GM12878 (cell line): ENCODE measurements at regions of chr9 and their contacts with region 1.

Region 1: GRCh38 chr9:121322037-121322775 is 47.8 kb downstream of the STOM start:
- DNase-seq: no peak
- ATAC-seq: no peak
- H3K4me3 ChIP-seq: no peak overlapping the region
- H3K27ac ChIP-seq: no peak overlapping the region; the same call in 1 of the 2 replicates
- H3K4me1 ChIP-seq: peaks cover 9% of the 10 kb centered on the region
- H3K27me3 ChIP-seq: no peaks in the 10 kb centered on the region
- CTCF ChIP-seq: no peak
- EP300 ChIP-seq: no peak
- POLR2A ChIP-seq: no peak
- RAD21 ChIP-seq: no peak

Region 2: GRCh38 chr9:121261107-121261460 is 61.1 kb before region 1 on chr9:
- CTCF ChIA-PET with region 1: no interaction called
- POLR2A ChIA-PET with region 1: no interaction called
- RAD21 ChIA-PET with region 1: no interaction called
- SMC1A ChIA-PET with region 1: no interaction called
- in situ Hi-C with region 1: no loop called
- intact Hi-C with region 1: no loop called
- DNase-seq: no peak
- ATAC-seq: no peak
- H3K4me3 ChIP-seq: no peak overlapping the region
- H3K27ac ChIP-seq: no peak overlapping the region
- H3K4me1 ChIP-seq: no peaks in the 10 kb centered on the region
- H3K27me3 ChIP-seq: no peaks in the 10 kb centered on the region
- CTCF ChIP-seq: no peak
- EP300 ChIP-seq: no peak
- POLR2A ChIP-seq: no peak
- RAD21 ChIP-seq: no peak

Region 3: DNA sequence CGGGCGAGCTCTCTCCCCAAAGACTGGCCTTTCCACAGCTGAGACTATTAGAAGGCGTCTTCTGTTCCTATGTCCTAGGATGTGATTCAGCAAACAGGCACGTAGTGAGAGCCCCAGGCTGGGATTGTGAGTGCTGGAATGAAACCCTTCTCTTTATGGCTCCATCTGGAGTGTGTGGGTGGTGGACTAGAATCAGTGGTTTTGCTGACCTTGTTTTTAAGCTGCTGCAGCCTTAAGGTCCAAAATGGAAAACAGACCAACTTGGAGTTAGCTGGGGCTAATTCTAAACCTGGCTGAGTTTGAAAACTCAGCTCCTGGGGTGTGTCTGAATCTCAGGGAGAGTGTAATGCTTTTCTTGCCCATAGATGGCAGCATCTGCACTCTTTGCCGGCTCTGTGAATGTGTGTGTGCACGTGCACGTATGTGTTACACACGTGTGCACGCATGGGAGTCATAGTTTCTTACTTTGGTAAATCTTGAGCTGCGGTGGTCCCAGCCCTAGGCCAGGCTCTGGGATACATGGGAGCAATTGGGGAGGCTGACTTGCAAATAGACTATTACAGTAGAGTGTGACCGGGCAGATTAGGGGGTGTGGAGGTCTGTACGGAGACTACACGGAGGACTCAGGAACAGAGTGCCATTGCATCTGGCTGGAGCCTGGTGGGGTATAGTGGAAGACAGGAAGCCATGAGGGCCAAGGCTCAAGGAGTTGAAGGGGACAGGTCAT is 43.5 kb before region 1 on chr9:
- CTCF ChIA-PET with region 1: interaction called, 16 read pairs
- POLR2A ChIA-PET with region 1: no interaction called
- RAD21 ChIA-PET with region 1: interaction called, 5 read pairs
- SMC1A ChIA-PET with region 1: no interaction called
- in situ Hi-C with region 1: no loop called
- intact Hi-C with region 1: no loop called
- DNase-seq: peak; percentile 11
- ATAC-seq: peak; percentile 95
- H3K4me3 ChIP-seq: no peak overlapping the region
- H3K27ac ChIP-seq: no peak overlapping the region
- H3K4me1 ChIP-seq: peaks cover 5% of the 10 kb centered on the region; the same call in 1 of the 2 replicates
- H3K27me3 ChIP-seq: no peaks in the 10 kb centered on the region
- CTCF ChIP-seq: peak; percentile 60 to 79 (median 62)
- EP300 ChIP-seq: no peak
- POLR2A ChIP-seq: no peak
- RAD21 ChIP-seq: peak; percentile 48

Region 4: GRCh38 chr9:121350993-121351561 is 28.9 kb after region 1 on chr9:
- CTCF ChIA-PET with region 1: interaction called, 20 read pairs
- POLR2A ChIA-PET with region 1: no interaction called
- RAD21 ChIA-PET with region 1: interaction called, 4 read pairs
- SMC1A ChIA-PET with region 1: interaction called, 5 read pairs
- in situ Hi-C with region 1: no loop called
- intact Hi-C with region 1: no loop called
- DNase-seq: no peak
- ATAC-seq: no peak
- H3K4me3 ChIP-seq: no peak overlapping the region
- H3K27ac ChIP-seq: no peak overlapping the region
- H3K4me1 ChIP-seq: peaks cover 15% of the 10 kb centered on the region
- H3K27me3 ChIP-seq: no peaks in the 10 kb centered on the region
- CTCF ChIP-seq: no peak
- EP300 ChIP-seq: no peak
- POLR2A ChIP-seq: no peak
- RAD21 ChIP-seq: no peak

Region 5: DNA sequence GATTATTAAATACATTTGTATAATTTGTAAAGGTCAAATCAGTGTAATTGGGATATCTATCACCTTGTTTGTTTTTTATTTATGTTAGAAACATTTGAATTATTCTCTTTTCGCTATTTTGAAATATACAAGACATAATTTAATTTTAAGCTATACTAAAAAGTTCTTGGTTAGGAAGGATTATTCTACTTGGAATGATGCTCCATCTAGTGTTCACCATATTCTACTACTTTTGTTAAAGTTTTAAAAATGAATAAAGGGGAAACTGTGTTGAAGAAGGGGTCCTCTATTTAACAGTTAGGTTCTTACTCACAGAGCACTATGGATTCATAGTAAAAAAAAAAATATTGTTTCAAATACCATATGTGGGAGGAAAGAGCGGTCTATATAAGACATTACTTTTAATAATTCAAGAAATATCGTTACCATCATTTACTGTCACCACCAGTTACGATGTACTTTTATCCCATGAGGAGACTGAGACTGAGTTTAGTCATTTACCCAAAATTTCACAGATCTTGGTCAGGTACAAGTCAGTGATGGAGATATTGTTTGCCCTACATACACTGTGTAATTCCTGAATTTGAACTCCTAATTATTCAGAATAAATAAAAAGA is 54.1 kb after region 1 on chr9:
- CTCF ChIA-PET with region 1: interaction called, 173 read pairs
- POLR2A ChIA-PET with region 1: no interaction called
- RAD21 ChIA-PET with region 1: interaction called, 37 read pairs
- SMC1A ChIA-PET with region 1: interaction called, 83 read pairs
- in situ Hi-C with region 1: no loop called
- intact Hi-C with region 1: loop called (anchors 1 kb)
- DNase-seq: no peak
- ATAC-seq: no peak
- H3K4me3 ChIP-seq: no peak overlapping the region
- H3K27ac ChIP-seq: no peak overlapping the region
- H3K4me1 ChIP-seq: no peaks in the 10 kb centered on the region
- H3K27me3 ChIP-seq: no peaks in the 10 kb centered on the region; a peak in 1 of 4 replicates
- CTCF ChIP-seq: peak in 1 of 3 experiments; percentile 9; a peak in 2 of 6 replicates
- EP300 ChIP-seq: no peak
- POLR2A ChIP-seq: no peak
- RAD21 ChIP-seq: peak; percentile 37; the same call in 1 of the 2 replicates

Region 6: DNA sequence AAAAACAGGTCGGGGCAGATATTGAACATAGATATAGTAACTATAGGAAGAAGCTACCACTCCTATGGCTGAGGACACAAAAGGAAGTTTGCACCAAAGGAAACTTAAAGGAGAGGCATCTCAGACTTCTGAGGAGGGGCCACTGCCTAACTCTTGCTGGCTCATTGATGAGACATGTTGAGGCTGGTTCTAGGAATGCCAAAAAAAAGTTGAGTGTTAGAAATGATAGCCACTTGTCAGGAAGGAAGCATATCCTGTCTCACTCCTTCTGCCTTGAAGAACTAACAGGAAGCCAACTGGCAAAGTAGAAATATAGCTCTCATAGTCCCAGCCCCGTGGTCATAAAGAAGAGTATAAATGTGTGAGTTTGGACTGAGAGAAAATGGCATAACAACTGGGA is 71.1 kb after region 1 on chr9:
- CTCF ChIA-PET with region 1: interaction called, 318 read pairs
- POLR2A ChIA-PET with region 1: no interaction called
- RAD21 ChIA-PET with region 1: interaction called, 106 read pairs
- SMC1A ChIA-PET with region 1: interaction called, 147 read pairs
- in situ Hi-C with region 1: loop called (anchors 5 kb)
- intact Hi-C with region 1: no loop called
- DNase-seq: no peak
- ATAC-seq: no peak
- H3K4me3 ChIP-seq: no peak overlapping the region
- H3K27ac ChIP-seq: no peak overlapping the region
- H3K4me1 ChIP-seq: no peaks in the 10 kb centered on the region
- H3K27me3 ChIP-seq: no peaks in the 10 kb centered on the region; a peak in 1 of 4 replicates
- CTCF ChIP-seq: no peak
- EP300 ChIP-seq: no peak
- POLR2A ChIP-seq: no peak
- RAD21 ChIP-seq: no peak

Region 7: GRCh38 chr9:121405899-121406298 is 83.7 kb after region 1 on chr9:
- CTCF ChIA-PET with region 1: interaction called, 318 read pairs
- POLR2A ChIA-PET with region 1: interaction called, 3 read pairs
- RAD21 ChIA-PET with region 1: interaction called, 106 read pairs
- SMC1A ChIA-PET with region 1: interaction called, 147 read pairs
- in situ Hi-C with region 1: no loop called
- intact Hi-C with region 1: no loop called
- DNase-seq: no peak
- ATAC-seq: no peak
- H3K4me3 ChIP-seq: no peak overlapping the region
- H3K27ac ChIP-seq: no peak overlapping the region
- H3K4me1 ChIP-seq: no peaks in the 10 kb centered on the region
- H3K27me3 ChIP-seq: no peaks in the 10 kb centered on the region
- CTCF ChIP-seq: no peak
- EP300 ChIP-seq: no peak
- POLR2A ChIP-seq: no peak
- RAD21 ChIP-seq: no peak